Gastrocnemius medialis (tissue), 4 donors: ENCODE measurements at regions of chr12 and their contacts with region 1.

Region 1: GRCh38 chr12:3658327-3659163 is 94.4 kb downstream of the CRACR2A start:
- DNase-seq: peak in 1 of 2 donors; percentile 21
- ATAC-seq: no peak
- H3K4me3 ChIP-seq: no peak overlapping the region
- H3K27ac ChIP-seq: no peak overlapping the region
- H3K4me1 ChIP-seq: no peaks in the 10 kb centered on the region
- H3K27me3 ChIP-seq: no peaks in the 10 kb centered on the region
- CTCF ChIP-seq: peak in 3 of 5 experiments; percentile 17 to 35 (median 23)
- POLR2A ChIP-seq: no peak

Region 2: GRCh38 chr12:3150931-3151835 is 507.4 kb before region 1 on chr12:
- in situ Hi-C with region 1: no loop called
- intact Hi-C with region 1: no loop called
- DNase-seq: no peak
- ATAC-seq: peak in 1 of 2 donors; percentile 13
- H3K4me3 ChIP-seq: no peak overlapping the region
- H3K27ac ChIP-seq: peak overlapping the region in 2 of 4 donors; percentile 33 to 48
- H3K4me1 ChIP-seq: peaks cover 27 to 46% of the 10 kb centered on the region in 2 donors
- H3K27me3 ChIP-seq: no peaks in the 10 kb centered on the region
- CTCF ChIP-seq: no peak
- POLR2A ChIP-seq: no peak

Region 3: GRCh38 chr12:3527181-3527580 is 131.4 kb before region 1 on chr12:
- in situ Hi-C with region 1: no loop called
- intact Hi-C with region 1: no loop called
- DNase-seq: no peak
- ATAC-seq: no peak
- H3K4me3 ChIP-seq: no peak overlapping the region
- H3K27ac ChIP-seq: no peak overlapping the region
- H3K4me1 ChIP-seq: peaks cover 12 to 19% of the 10 kb centered on the region in 2 donors
- H3K27me3 ChIP-seq: no peaks in the 10 kb centered on the region
- CTCF ChIP-seq: no peak
- POLR2A ChIP-seq: no peak

Region 4: DNA sequence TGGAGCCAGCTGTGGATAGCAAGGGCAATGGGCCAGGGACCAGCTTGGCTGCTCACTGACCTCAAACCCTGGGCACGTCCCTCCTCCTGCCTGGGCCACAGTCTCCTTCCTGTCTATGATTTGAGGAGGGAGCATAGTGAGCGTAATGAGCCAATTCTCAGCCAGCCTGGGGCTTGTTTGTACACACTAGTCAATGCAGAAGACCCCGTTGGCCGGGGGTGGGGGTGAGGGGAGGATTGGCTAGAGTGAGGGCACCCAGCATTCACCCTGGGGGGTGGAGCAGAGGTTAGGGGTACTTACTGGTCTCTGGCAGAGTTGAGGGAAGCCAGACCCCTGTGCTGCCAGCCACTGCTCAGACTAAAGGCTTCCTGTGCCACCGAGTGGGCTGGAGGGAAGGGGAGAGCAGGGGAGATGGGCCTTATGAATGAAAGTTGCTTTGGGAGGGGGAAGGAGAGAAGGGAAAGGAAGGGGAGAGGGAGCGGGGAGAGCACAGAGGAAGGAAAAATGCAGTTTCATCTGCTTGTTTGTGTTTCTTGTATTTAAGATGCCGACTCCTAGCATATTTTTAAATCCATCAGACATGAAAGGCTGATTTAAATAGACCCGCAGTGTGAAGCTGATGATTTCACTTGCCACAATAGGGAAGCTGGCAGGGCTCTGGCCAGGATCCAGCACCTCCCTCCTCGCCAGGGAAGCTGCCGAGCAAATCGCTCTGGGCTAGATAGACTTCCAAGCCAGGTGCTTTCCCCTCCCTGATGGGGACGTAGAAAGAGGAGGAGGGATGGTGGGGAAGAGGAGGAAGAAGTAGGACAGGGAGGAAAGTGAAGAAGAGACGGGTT is 53.6 kb before region 1 on chr12:
- in situ Hi-C with region 1: no loop called
- intact Hi-C with region 1: no loop called
- DNase-seq: peak in 1 of 2 donors; percentile 22
- ATAC-seq: no peak
- H3K4me3 ChIP-seq: no peak overlapping the region
- H3K27ac ChIP-seq: no peak overlapping the region
- H3K4me1 ChIP-seq: peaks cover 23% of the 10 kb centered on the region in 2 donors
- H3K27me3 ChIP-seq: no peaks in the 10 kb centered on the region
- CTCF ChIP-seq: no peak
- POLR2A ChIP-seq: no peak

Region 5: DNA sequence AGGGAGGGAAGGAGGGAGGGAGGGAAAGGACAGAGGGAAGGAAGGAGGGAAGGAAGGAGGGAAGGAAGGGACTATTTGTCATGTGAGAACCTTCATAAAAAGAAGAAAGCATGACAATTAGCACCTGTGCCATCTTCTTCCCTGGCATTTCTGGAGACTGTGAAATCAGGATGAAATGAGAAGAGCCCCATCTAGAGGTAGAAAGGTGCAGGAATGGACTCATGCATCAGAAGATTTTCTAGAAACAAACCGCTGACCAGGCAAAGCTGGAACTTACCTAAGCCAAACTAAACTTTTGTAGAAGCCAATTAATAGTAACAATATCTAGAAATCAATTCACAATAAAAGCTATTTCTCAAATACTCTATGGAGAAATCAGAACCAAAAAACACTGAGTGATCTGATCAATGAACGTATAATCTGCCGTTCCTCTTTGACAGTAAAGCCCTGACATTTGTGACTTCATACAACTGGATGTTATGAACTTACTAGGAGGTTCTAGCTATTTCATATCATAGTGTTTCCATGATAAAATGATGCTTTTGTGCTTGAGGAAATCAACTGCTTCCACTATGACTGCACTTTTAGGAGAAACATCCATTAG is 118.8 kb after region 1 on chr12:
- in situ Hi-C with region 1: loop called in 3 of 4 experiments (anchors 10 kb)
- intact Hi-C with region 1: loop called (anchors 1 kb)
- DNase-seq: no peak
- ATAC-seq: peak; percentile 83 to 85
- H3K4me3 ChIP-seq: no peak overlapping the region
- H3K27ac ChIP-seq: no peak overlapping the region
- H3K4me1 ChIP-seq: peaks cover 0 to 4% of the 10 kb centered on the region in 2 donors
- H3K27me3 ChIP-seq: no peaks in the 10 kb centered on the region
- CTCF ChIP-seq: peak; percentile 44 to 71 (median 56)
- POLR2A ChIP-seq: no peak

Region 6: DNA sequence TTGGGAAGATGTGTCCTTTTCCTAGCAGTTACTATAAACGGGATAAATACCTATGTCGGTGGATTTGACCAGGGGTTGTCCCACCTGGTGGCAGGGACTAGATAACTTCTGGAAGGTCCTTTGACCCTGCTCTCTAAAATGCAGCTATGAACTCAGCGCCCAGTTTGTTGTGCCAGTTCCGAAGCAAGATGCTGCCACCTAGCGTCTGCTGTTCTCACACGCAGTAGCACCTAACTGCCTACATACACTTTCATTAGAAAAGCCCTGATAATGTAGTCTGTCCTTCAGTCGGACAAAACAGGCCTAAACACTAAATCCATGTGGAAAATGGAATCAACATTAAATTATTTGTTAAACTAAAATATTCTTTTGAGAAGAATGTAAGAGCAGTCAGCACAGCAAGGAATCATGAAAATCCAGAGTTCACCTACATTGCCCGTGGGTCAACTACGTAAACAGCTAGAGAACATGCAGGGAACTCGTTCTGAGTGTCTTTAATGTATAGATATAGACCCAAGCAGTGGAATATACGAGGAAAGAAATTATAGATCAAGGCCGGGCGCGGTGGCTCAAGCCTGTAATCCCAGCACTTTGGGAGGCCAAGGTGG is 145.4 kb after region 1 on chr12:
- in situ Hi-C with region 1: no loop called
- intact Hi-C with region 1: loop called (anchors 10 kb)
- DNase-seq: peak; percentile 26 to 59
- ATAC-seq: peak; percentile 73 to 86
- H3K4me3 ChIP-seq: no peak overlapping the region
- H3K27ac ChIP-seq: no peak overlapping the region
- H3K4me1 ChIP-seq: no peaks in the 10 kb centered on the region
- H3K27me3 ChIP-seq: no peaks in the 10 kb centered on the region
- CTCF ChIP-seq: peak; percentile 60 to 83 (median 71)
- POLR2A ChIP-seq: no peak